ENCODE measurements at regions of chr1 and their contacts with region 1.

Region 1: DNA sequence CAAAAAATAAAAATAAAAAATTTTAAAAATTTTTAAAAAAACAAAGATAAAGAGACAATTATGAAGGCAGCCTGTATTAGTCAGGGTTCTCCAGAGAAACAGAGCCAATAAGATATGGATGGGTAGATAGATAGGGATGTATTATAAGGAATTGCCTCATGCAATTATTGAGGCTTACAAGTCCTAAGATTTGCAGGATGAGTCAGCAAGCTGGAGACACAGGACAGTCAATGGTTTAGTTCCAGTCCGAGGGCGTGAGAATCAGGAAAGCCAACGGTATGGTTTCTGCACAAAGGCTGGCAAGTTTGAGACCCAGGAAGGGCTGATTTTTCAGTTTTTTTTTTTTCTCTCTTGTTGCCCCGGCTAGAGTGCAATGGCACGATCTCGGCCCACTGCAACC is 24.1 kb upstream of the EIF4G3 start:
- DNase-seq: no peak
- H3K4me3 ChIP-seq: no peak overlapping the region
- H3K27me3 ChIP-seq: no peaks in the 10 kb centered on the region
- CTCF ChIP-seq: no peak

Region 2: GRCh38 chr1:20696397-20697329 is 504.1 kb before region 1 on chr1:
- CTCF ChIA-PET with region 1: interaction called, 147 read pairs
- POLR2A ChIA-PET with region 1: no interaction called
- DNase-seq: peak; percentile 76
- H3K4me3 ChIP-seq: peak overlapping the region; percentile 48
- H3K27me3 ChIP-seq: no peaks in the 10 kb centered on the region
- CTCF ChIP-seq: peak; percentile 89

Region 3: DNA sequence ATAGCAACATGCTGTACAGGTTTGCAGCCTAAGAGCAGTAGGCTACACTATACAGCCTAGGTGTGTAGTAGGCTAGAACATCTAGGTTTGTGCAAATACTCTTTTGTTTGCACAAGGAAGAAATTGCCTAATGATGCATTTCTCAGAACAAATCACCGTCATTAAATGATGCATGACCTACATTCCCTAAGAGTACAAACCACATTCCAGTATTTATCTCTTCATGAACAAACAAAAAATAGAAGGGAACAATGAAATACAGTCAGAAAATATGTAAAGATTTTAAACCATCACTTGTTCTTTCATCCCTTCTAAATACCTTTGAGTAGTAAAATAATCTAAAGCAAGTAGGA is 303.9 kb before region 1 on chr1:
- CTCF ChIA-PET with region 1: no interaction called
- POLR2A ChIA-PET with region 1: no interaction called
- DNase-seq: no peak
- H3K4me3 ChIP-seq: no peak overlapping the region
- H3K27me3 ChIP-seq: no peaks in the 10 kb centered on the region
- CTCF ChIP-seq: no peak

Region 4: DNA sequence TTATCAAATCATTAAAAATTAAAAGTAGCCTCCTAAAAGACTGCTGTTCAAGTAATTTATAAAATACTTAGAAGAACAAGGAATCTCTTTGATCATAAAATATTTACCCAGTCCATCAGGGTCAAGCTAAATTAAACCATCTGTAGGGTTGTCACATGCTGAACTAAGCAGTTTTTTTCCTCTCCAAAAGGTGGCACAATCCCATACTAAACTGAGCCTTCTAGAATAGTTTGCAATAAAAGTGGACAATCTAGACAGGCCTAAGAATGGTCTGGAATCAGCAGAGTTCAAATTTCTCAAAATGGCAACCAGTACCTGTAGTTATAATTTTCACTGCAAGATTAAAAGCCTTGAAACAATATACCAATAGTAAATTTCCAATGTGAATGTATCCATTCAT is 218.9 kb before region 1 on chr1:
- CTCF ChIA-PET with region 1: interaction called, 22 read pairs
- POLR2A ChIA-PET with region 1: no interaction called
- DNase-seq: no peak
- H3K4me3 ChIP-seq: no peak overlapping the region
- H3K27me3 ChIP-seq: no peaks in the 10 kb centered on the region
- CTCF ChIP-seq: peak; percentile 30

Region 5: GRCh38 chr1:20992322-20993056 is 208.3 kb before region 1 on chr1:
- CTCF ChIA-PET with region 1: interaction called, 10 read pairs
- POLR2A ChIA-PET with region 1: no interaction called
- DNase-seq: no peak
- H3K4me3 ChIP-seq: no peak overlapping the region
- H3K27me3 ChIP-seq: no peaks in the 10 kb centered on the region
- CTCF ChIP-seq: no peak

Region 6: GRCh38 chr1:21077085-21077484 is 123.7 kb before region 1 on chr1:
- CTCF ChIA-PET with region 1: interaction called, 11 read pairs
- POLR2A ChIA-PET with region 1: no interaction called
- DNase-seq: no peak
- H3K4me3 ChIP-seq: no peak overlapping the region
- H3K27me3 ChIP-seq: no peaks in the 10 kb centered on the region
- CTCF ChIP-seq: no peak

Region 7: GRCh38 chr1:21184276-21184675 is 16.5 kb before region 1 on chr1:
- CTCF ChIA-PET with region 1: interaction called, 20 read pairs
- POLR2A ChIA-PET with region 1: no interaction called
- DNase-seq: no peak
- H3K4me3 ChIP-seq: no peak overlapping the region
- H3K27me3 ChIP-seq: no peaks in the 10 kb centered on the region
- CTCF ChIP-seq: no peak

Region 8: DNA sequence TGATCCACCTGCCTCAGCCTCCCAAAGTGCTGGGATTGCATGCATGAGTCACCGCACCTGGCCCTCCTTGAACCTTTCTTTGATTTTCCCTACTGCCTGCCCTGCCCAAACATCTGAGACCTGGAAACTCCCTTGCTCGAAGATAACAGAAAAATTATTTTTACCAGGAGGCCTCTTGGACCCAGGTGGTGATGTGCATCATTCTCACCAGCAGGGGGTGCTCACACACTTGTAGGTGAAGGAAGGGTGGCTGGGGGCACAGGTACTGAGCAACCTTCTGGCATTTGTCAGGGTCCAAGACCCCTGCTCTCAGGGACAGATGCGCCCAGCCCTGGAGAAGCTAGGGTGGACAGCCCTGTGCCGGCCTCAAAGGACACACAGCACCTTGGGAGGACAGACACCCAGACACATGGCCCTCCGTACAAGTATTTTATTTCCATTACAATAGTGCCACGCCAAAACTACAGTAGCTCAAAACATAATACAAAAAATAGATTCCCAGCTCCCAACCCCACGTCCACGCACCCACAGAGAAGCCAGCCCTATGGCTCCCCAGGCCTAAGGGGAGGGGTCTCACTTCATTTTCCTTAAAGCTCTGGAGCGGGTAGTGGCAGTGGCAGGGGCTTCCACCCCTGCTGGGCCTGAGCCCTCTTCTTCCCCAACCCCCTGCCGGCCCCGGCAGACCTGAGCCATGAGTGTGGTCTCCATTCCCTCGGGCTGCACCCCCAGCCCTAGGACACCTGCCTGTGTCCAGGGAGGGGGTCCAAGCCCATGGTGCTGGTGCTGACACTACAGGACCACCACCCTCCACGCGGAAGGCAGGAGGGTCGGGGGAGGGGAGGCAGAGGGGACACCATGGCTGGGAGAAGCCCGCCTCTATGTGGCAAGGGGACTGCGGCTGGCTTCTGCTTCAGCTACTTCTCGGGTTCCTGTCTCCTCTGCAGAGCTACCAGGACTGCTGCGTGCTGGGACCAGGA is 16.4 kb after region 1 on chr1:
- CTCF ChIA-PET with region 1: interaction called, 13 read pairs
- POLR2A ChIA-PET with region 1: no interaction called
- DNase-seq: no peak
- H3K4me3 ChIP-seq: no peak overlapping the region
- H3K27me3 ChIP-seq: no peaks in the 10 kb centered on the region
- CTCF ChIP-seq: peak; percentile 83

Measured in BJ (cell line).